H1 (cell line): ENCODE measurements at regions of chr12 and their contacts with region 1.

Region 1: DNA sequence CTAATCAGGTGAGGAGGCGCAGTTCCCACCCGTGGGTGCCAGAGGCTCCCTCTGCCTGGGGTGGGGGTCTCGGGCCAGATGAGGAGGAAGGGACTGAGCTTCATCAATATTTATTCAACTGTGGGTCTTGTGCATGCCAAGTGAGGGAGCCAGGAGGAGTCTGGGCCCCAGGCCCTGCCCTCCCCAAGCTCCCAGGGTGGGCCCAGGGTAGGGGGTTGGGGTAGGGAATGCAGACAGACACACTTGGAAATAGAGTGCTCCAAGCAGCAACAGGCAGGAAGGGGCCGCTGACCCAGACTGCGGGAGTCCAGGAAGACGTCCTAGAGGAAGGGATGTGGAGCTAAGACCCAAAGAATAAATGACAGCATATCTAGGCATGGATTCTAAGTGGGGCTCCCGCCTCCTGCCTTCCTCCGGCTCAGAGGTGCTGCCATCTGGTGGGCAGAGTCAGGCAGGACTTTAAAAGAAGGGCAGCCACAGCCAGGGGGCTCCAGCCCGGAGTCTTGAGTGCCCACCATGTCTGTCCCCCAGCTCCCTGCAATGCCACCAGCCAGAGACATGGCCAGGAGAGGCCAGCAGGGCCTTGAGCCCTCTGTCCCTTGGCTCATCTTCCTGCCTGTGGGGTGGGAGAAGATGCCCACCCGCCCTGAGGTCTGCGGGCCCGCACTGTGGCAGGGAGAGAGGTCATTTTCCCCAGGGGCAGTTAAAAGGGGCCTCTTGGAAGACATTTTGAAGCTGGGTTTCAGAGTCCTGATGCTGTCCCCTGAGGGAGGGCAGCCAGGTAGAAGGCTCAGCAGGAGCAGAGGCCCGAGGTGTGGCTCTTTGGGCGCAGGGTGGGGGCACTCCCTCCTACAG is 70.1 kb downstream of the PHETA1 start:
- DNase-seq: peak; percentile 41 to 87
- H3K4me3 ChIP-seq: no peak overlapping the region
- H3K27ac ChIP-seq: 0 out of 2 replicates have a peak overlapping the region, but pooled peaks have one; percentile 34
- H3K4me1 ChIP-seq: peaks cover 0 to 7% (median 6%) of the 10 kb centered on the region in 4 experiments; a peak in 6 of 7 replicates
- H3K27me3 ChIP-seq: no peaks in the 10 kb centered on the region
- CTCF ChIP-seq: peak; percentile 91 to 99 (median 95)
- EP300 ChIP-seq: no peak
- POLR2A ChIP-seq: no peak
- RAD21 ChIP-seq: peak; percentile 67 to 79

Region 2: GRCh38 chr12:111024205-111024801 is 274.5 kb before region 1 on chr12:
- CTCF ChIA-PET with region 1: interaction called, 24 read pairs
- POLR2A ChIA-PET with region 1: no interaction called
- DNase-seq: peak in 1 of 2 experiments; percentile 90
- H3K4me3 ChIP-seq: no peak overlapping the region
- H3K27ac ChIP-seq: no peak overlapping the region
- H3K4me1 ChIP-seq: no peaks in the 10 kb centered on the region; a peak in 2 of 7 replicates
- H3K27me3 ChIP-seq: peaks cover 0 to 2% (median 0%) of the 10 kb centered on the region in 4 experiments; a peak in 3 of 7 replicates
- CTCF ChIP-seq: peak; percentile 83 to 97 (median 93)
- EP300 ChIP-seq: no peak
- POLR2A ChIP-seq: no peak
- RAD21 ChIP-seq: peak; percentile 95 to 97

Region 3: DNA sequence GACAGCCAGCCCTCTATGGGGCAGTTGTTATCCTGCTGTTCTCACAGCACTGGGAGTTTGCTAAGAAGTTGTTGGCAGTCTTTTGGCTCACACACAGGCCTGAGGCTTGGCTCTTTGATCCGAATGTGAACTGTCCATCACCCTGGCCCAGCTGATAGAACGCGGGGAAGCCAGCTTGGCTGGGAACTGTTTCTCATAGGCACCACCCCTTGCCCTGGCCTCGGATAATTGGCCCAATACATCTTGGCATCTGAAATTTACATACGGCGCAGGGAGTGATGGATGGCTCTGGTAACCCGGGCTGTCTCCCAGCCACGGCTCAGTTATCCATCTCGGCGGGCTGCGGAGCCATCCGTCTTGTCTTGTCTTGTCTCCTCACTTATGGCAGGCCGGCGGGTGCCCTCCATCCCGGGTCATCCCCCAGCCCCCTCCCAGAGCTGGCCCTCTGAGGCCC is 94.0 kb before region 1 on chr12:
- CTCF ChIA-PET with region 1: interaction called, 13 read pairs
- POLR2A ChIA-PET with region 1: no interaction called
- DNase-seq: no peak
- H3K4me3 ChIP-seq: no peak overlapping the region
- H3K27ac ChIP-seq: no peak overlapping the region
- H3K4me1 ChIP-seq: peaks cover 0 to 8% (median 4%) of the 10 kb centered on the region in 4 experiments; a peak in 5 of 7 replicates
- H3K27me3 ChIP-seq: no peaks in the 10 kb centered on the region
- CTCF ChIP-seq: no peak
- EP300 ChIP-seq: no peak
- POLR2A ChIP-seq: no peak
- RAD21 ChIP-seq: no peak

Region 4: GRCh38 chr12:111268738-111269572 is 29.9 kb before region 1 on chr12:
- CTCF ChIA-PET with region 1: interaction called, 285 read pairs
- POLR2A ChIA-PET with region 1: no interaction called
- DNase-seq: peak in 1 of 2 experiments; percentile 81
- H3K4me3 ChIP-seq: no peak overlapping the region
- H3K27ac ChIP-seq: no peak overlapping the region
- H3K4me1 ChIP-seq: no peaks in the 10 kb centered on the region
- H3K27me3 ChIP-seq: no peaks in the 10 kb centered on the region
- CTCF ChIP-seq: peak; percentile 83 to 93 (median 86)
- EP300 ChIP-seq: no peak
- POLR2A ChIP-seq: no peak
- RAD21 ChIP-seq: peak; percentile 62 to 75

Region 5: DNA sequence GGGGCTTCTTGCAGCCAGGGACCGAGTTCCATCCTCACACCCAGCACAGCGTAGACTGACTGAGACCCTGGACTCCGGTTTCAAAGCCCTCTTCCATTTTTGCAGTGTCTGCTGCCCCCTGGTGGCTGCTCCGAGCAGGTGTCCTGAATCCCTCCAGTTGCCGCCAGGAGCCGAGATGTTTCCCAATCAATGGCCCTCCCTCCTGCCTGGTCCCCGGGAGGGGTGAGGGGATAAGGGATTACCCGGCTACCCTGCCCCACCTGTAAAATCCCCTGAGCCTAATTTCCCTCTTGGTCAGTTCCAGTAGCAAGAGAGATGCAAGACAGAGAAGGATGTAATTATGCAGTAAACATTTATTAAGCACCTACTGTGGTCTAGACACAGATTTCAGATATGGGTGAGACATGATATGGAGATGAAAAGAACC is 15.0 kb after region 1 on chr12:
- CTCF ChIA-PET with region 1: interaction called, 115 read pairs
- POLR2A ChIA-PET with region 1: interaction called, 15 read pairs
- DNase-seq: peak; percentile 73 to 95
- H3K4me3 ChIP-seq: no peak overlapping the region
- H3K27ac ChIP-seq: no peak overlapping the region
- H3K4me1 ChIP-seq: no peaks in the 10 kb centered on the region
- H3K27me3 ChIP-seq: no peaks in the 10 kb centered on the region
- CTCF ChIP-seq: peak; percentile 90 to 97 (median 97)
- EP300 ChIP-seq: no peak
- POLR2A ChIP-seq: no peak
- RAD21 ChIP-seq: peak; percentile 89 to 92